PC-9 (cell line): ENCODE measurements at regions of chr1 and their contacts with region 1.

Region 1: DNA sequence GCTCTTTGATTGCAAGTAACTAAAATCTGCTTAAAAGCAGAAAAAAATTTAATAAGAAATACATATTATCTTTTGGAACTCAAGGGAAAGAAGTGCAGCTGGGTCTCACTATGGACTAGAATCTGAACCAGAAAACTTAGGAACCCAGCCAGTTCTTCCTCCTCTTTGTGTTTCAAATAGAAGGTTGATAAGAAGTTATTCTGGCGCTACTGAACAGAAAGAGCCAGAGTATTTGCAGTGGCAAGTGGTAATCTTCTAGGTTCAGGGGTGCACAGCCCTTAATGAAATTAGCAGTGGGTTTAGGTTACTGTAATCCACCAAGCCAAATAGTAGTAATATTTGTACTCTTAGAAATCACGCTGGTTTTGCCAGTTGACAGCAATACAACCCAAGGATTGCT is 28.5 kb downstream of the BTBD8 start:
- DNase-seq: no peak
- H3K4me3 ChIP-seq: no peak overlapping the region
- H3K27ac ChIP-seq: no peak overlapping the region
- H3K4me1 ChIP-seq: no peaks in the 10 kb centered on the region
- H3K27me3 ChIP-seq: no peaks in the 10 kb centered on the region
- CTCF ChIP-seq: no peak

Region 2: DNA sequence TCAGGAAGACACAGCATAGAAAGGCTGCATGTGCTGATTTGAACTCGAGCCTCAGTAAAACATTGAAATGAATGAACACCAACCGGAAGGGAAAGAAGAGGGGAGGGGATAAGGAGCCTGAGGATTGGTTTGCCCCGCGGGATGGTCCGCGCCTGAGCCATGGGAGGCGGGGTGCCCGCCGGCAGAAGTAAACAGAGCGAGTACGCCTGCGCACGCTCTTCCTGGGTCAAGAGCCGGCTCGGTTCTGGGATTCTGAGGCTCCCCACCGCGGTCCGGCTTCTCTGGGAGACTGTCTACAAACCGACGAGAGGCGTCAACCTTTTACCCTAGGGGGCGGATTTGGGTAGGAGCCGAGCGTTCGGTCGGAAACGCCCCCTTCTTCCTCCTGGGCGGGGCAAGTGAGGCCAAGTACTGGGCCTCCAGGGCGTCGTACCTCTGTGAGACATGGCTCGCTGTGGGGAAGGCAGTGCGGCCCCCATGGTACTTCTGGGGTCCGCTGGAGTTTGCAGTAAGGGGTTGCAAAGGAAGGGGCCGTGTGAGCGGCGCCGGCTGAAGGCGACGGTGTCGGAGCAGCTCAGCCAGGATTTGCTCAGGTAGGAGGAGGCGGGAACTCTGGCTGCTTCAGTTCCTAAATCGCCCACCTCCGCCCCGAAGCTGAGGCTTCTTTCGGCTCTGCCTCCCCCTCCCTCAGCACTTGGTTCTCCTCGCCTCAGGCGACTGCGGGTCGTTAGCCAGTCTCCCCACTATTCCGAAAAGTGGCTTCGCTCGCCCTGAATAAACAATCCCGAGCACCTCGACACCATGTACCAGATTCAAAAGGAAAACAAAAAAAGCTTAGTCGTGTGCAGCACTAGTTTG is 28.3 kb before region 1 on chr1 and contains the start of gene BTBD8:
- CTCF ChIA-PET with region 1: no interaction called
- POLR2A ChIA-PET with region 1: no interaction called
- intact Hi-C with region 1: no loop called
- DNase-seq: peak; percentile 78 to 81
- H3K4me3 ChIP-seq: peak within 1 kb of the TSS; percentile 67
- H3K27ac ChIP-seq: peak within 1 kb of the TSS; percentile 11
- H3K4me1 ChIP-seq: peaks cover 15% of the 10 kb centered on the region
- H3K27me3 ChIP-seq: no peaks in the 10 kb centered on the region
- CTCF ChIP-seq: no peak; the same call in 1 of the 2 replicates
- total RNA-seq, gene BTBD8: 8.1 TPM in 2 replicates

Region 3: GRCh38 chr1:92118826-92119225 is 10.2 kb after region 1 on chr1:
- CTCF ChIA-PET with region 1: no interaction called
- POLR2A ChIA-PET with region 1: interaction called, 23 read pairs
- intact Hi-C with region 1: no loop called
- DNase-seq: peak; percentile 8 to 67
- H3K4me3 ChIP-seq: no peak overlapping the region
- H3K27ac ChIP-seq: no peak overlapping the region
- H3K4me1 ChIP-seq: peaks cover 9% of the 10 kb centered on the region
- H3K27me3 ChIP-seq: no peaks in the 10 kb centered on the region
- CTCF ChIP-seq: no peak

Region 4: GRCh38 chr1:92123868-92124267 is 15.2 kb after region 1 on chr1:
- CTCF ChIA-PET with region 1: no interaction called
- POLR2A ChIA-PET with region 1: interaction called, 23 read pairs
- intact Hi-C with region 1: no loop called
- DNase-seq: no peak
- H3K4me3 ChIP-seq: no peak overlapping the region
- H3K27ac ChIP-seq: no peak overlapping the region
- H3K4me1 ChIP-seq: peaks cover 4% of the 10 kb centered on the region
- H3K27me3 ChIP-seq: no peaks in the 10 kb centered on the region
- CTCF ChIP-seq: no peak